ENCODE measurements at regions of chr19 and their contacts with region 1.

Region 1: DNA sequence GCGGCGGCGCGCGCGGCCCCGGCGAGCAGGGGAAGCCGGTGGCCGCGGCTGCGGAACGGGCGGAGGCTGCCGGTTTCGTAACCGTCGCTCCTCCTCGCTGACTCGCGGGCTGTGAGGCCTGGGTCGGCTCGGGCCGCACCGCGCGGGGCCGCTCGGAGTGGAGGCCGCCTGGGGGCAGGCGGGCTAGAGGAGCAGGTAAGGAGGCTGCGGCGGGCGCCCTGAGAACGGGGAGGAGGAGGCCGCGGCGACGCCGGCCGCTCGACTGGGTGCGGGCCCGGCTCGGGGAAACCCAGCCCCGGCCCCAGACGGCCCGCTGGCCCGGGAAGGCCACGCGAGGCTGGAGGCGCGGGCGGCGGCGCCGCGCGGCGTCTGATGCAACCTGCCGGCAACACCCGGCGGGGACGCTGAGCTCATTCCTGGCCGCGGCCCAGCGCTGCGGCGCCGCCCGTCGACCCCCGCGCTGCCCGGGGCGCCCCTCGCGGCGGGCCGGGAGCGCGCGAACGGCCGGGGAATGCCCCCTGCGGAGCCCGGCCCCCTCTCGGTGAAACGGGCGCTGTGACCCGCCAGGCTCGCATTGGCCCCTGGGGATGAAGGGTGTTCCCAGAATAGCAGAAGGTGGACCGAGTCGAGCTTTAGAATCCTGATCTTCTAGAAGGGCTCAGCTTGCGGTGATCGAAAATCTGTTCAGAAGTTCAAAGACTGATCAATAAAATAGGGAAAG is at the start of gene CEBPG:
- DNase-seq: peak; percentile 88
- H3K4me3 Mint-ChIP-seq: peak within 1 kb of the TSS; percentile 94
- H3K27ac Mint-ChIP-seq: peak within 1 kb of the TSS; percentile 80
- H3K4me1 Mint-ChIP-seq: peaks cover 39% of the 10 kb centered on the region
- H3K27me3 Mint-ChIP-seq: no peaks in the 10 kb centered on the region
- total RNA-seq, gene CEBPG: 29.7 and 29.8 TPM in 2 replicates

Region 2: DNA sequence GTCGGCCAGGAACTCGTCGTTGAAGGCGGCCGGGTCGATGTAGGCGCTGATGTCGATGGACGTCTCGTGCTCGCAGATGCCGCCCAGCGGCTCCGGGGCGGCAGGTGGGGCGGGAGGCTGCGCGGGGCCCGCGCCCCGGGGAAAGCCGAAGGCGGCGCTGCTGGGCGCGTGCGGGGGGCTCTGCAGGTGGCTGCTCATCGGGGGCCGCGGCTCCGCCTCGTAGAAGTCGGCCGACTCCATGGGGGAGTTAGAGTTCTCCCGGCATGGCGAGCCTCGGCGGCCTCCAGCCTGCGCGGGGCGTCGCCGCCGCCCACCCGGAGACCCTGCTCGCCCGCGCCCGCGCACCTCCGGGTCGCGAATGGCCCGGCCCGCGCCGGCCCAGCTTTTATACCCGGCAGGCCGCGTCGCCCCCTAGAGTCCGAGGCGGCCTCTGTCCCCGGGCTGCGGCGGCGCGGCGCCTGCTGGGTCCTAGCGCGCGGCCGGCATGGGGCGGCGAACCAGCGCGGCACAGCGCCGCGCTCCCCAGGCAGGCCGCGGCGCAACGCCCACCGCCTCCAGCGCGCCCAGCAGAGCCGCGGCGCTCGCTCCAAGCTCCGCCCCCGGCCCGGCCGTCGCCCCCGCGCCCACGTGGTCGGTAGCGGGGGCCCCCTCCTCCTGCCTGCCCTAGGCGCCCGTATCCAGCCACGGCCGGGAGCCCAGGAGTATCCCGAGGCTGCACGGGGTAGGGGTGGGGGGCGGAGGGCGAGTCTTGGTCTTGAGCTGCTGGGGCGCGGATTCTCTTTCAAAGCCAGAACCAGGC is 71.5 kb before region 1 on chr19 and contains the start of gene CEBPA:
- intact Hi-C with region 1: loop called (anchors 2 kb)
- DNase-seq: peak; percentile 87
- H3K4me3 Mint-ChIP-seq: peak within 1 kb of the TSS; percentile 72
- H3K27ac Mint-ChIP-seq: no peak within 1 kb of the TSS
- H3K4me1 Mint-ChIP-seq: no peaks in the 10 kb centered on the region
- H3K27me3 Mint-ChIP-seq: peaks cover 45% of the 10 kb centered on the region
- total RNA-seq, gene CEBPA: 1.2 and 1.4 TPM in 2 replicates

Region 3: DNA sequence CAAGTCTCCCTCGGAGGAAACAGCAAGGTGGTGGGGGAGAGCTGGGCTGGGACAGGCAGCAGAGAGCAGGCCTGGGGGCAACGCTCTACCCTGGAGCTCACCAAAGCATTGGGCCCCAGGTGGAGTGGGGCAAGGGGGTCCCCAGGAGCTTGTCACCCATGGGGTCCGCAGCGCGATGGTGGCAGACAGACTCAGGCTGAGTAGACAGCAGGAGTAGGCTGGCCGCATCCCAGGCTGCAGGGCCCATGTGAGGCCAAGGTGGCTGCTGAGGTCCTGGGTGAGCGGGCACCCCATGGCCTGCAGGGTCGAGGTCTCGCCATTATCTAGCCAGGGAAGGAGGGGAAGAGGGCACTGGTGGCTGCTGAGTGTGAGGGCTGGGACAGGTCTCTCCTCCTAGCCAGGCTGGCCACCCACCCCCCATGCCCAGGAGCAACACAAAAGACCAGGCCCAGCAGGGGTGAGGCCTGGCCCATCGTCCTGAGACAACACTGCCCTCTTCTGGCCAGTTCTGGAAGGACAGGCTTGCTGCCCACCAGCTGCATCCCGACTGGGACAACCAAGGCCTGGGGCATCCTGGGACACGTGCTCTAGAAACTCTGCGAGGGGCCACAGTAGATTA is 32.8 kb after region 1 on chr19:
- intact Hi-C with region 1: no loop called
- DNase-seq: peak; percentile 93
- H3K4me3 Mint-ChIP-seq: no peak overlapping the region
- H3K27ac Mint-ChIP-seq: no peak overlapping the region
- H3K4me1 Mint-ChIP-seq: no peaks in the 10 kb centered on the region
- H3K27me3 Mint-ChIP-seq: no peaks in the 10 kb centered on the region

Region 4: GRCh38 chr19:34134190-34135053 is 760.6 kb after region 1 on chr19:
- intact Hi-C with region 1: loop called (anchors 5 kb)
- DNase-seq: peak; percentile 97
- H3K4me3 Mint-ChIP-seq: peak overlapping the region; percentile 94
- H3K27ac Mint-ChIP-seq: peak overlapping the region; percentile 92
- H3K4me1 Mint-ChIP-seq: peaks cover 14% of the 10 kb centered on the region
- H3K27me3 Mint-ChIP-seq: peaks cover 4% of the 10 kb centered on the region

Measured in activated CD4-positive, alpha-beta T cell treated with anti-CD3 and anti-CD28 coated beads, Interleukin-2, amount 10 ng/mL, durations not matched to agents 24 days and 14 days (primary cell).